PC-9 (cell line): ENCODE measurements at regions of chr11 and their contacts with region 1.

Region 1: DNA sequence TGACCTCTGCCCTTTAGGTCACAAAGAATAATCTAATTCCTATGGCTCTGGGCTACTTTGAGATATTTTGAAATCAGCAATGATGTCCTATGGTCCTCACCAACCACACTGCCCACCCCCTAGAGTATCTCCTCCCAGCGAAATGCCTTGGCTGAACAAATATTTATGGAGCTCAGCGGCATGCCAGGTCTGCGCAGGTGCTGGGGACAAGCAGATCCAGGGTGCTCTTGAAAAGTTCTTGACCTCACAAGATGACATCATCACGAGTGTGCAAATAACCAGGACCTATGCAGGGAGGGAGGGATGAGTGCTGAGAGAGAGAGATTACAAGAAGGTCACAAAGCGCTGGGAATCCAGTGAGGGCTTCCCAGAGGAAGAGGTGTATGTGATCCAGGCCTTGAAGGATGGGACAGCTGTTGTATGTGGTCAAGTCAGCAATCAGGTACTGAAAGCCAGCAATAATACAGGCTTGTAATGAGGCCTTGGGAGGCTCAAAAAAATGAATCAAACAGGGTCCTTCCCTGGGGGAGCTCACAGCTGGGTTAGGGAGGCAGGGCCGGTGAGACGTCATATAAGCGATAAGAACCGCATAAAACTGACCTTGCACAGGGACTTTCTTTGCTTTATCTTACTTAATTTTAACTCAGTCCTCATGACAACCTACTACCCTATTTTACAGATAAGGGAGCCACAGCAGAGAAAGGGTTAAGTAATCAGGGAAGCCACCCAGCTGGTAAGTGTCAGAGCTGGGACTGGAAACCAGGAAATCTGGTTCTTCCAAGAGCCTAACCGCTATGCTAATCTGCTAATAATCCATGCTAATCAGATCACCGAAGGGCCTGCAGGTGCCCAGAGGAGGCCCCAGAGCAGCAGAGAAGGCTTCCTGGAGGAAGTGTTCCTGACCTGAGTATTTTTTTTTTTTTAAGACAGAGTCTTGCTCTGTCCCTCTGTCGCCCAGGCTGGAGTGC is 8.3 kb downstream of the ARRB1 start:
- DNase-seq: peak in 1 of 2 experiments; percentile 83
- H3K4me3 ChIP-seq: no peak overlapping the region
- H3K27ac ChIP-seq: no peak overlapping the region
- H3K4me1 ChIP-seq: peaks cover 93% of the 10 kb centered on the region
- H3K27me3 ChIP-seq: no peaks in the 10 kb centered on the region
- CTCF ChIP-seq: no peak

Region 2: DNA sequence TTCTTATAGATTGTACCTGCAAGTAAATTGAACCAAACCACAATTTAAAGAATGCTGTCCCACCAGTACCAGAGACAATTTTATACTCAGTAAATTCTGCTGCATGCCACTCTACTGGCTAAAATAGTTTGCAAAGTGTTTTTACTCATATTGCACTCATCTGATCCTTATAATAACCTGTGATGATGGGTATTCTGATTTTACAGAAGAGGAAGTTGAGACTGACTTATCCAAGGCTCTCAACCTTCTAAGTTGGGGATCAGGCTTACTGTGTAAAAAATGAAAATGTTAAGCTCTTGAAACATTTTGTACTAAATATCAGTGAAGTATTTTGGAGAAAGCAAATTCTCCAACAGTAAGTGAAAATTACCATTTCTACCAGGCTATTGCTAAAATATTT is 556.6 kb before region 1 on chr11:
- CTCF ChIA-PET with region 1: no interaction called
- POLR2A ChIA-PET with region 1: interaction called, 12 read pairs
- intact Hi-C with region 1: no loop called
- DNase-seq: peak in 1 of 2 experiments; percentile 46
- H3K4me3 ChIP-seq: no peak overlapping the region
- H3K27ac ChIP-seq: no peak overlapping the region
- H3K4me1 ChIP-seq: peaks cover 27% of the 10 kb centered on the region
- H3K27me3 ChIP-seq: no peaks in the 10 kb centered on the region
- CTCF ChIP-seq: no peak

Region 3: GRCh38 chr11:74926304-74927030 is 416.7 kb before region 1 on chr11:
- CTCF ChIA-PET with region 1: no interaction called
- POLR2A ChIA-PET with region 1: no interaction called
- intact Hi-C with region 1: no loop called
- DNase-seq: no peak
- H3K4me3 ChIP-seq: no peak overlapping the region
- H3K27ac ChIP-seq: no peak overlapping the region
- H3K4me1 ChIP-seq: no peaks in the 10 kb centered on the region
- H3K27me3 ChIP-seq: no peaks in the 10 kb centered on the region
- CTCF ChIP-seq: no peak